ENCODE measurements at regions of chr4 and their contacts with region 1.

Region 1: GRCh38 chr4:108917255-108917654 is 154.4 kb upstream of the ETNPPL start:
- DNase-seq: no peak

Region 2: GRCh38 chr4:108540536-108540935 is 376.7 kb before region 1 on chr4:
- intact Hi-C with region 1: no loop called
- DNase-seq: no peak

Region 3: DNA sequence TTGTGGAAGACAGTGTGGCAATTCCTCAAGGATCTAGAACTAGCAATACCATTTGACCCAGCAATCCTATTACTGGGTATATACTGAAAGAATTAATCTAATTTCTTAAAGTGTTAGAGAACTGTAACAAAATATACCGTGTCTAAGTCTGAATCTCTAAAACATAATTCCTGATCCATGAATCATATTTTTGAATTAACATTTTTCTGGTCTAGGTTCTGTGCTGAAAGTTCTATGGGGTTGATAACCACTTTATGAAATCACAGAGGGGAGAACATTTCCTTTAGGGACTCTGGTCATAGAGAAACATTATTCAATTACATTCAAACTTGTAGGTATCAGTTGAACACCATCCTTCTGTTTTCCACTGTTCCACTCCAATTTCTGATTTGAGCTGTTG is 62.5 kb before region 1 on chr4:
- intact Hi-C with region 1: loop called in 1 of 2 experiments (anchors 5 kb)
- DNase-seq: no peak

Measured in posterior vena cava (tissue), 2 donors.